ENCODE measurements at regions of chr1 and their contacts with region 1.

Region 1: DNA sequence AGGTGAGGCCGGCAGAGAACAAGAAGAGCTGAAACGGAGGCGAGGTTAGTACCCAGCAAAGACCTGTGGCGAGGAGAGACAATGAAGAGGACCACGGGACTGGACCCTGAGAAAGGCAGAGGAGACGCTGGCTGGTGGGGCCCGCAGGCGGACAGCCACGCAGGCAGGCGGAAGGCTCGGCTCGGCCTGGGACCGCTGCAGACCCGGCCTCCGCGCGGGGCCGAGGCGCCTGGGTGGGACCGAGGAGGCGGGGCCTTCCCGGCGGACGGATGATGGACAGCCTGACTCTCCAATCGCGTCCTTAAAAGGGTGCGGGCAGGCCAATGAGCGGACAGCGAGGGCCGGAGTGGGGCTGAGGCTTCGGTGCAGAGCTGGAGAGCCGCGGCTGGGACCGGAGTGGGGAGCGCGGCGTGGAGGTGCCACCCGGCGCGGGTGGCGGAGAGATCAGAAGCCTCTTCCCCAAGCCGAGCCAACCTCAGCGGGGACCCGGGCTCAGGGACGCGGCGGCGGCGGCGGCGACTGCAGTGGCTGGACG is at the start of gene MPZL1:
- DNase-seq: peak; percentile 98 to 100 (median 100)
- ATAC-seq: peak; percentile 97
- H3K4me3 ChIP-seq: peak within 1 kb of the TSS; percentile 73
- H3K27ac ChIP-seq: peak within 1 kb of the TSS; percentile 65
- H3K4me1 ChIP-seq: peaks cover 34 to 37% of the 10 kb centered on the region in 2 experiments; a peak in 4 of 5 replicates
- H3K27me3 ChIP-seq: no peaks in the 10 kb centered on the region
- CTCF ChIP-seq: no peak
- EP300 ChIP-seq: no peak
- POLR2A ChIP-seq: peak; percentile 72
- RAD21 ChIP-seq: no peak
- polyA plus RNA-seq, gene MPZL1: 14.5 to 20.5 TPM

Region 2: DNA sequence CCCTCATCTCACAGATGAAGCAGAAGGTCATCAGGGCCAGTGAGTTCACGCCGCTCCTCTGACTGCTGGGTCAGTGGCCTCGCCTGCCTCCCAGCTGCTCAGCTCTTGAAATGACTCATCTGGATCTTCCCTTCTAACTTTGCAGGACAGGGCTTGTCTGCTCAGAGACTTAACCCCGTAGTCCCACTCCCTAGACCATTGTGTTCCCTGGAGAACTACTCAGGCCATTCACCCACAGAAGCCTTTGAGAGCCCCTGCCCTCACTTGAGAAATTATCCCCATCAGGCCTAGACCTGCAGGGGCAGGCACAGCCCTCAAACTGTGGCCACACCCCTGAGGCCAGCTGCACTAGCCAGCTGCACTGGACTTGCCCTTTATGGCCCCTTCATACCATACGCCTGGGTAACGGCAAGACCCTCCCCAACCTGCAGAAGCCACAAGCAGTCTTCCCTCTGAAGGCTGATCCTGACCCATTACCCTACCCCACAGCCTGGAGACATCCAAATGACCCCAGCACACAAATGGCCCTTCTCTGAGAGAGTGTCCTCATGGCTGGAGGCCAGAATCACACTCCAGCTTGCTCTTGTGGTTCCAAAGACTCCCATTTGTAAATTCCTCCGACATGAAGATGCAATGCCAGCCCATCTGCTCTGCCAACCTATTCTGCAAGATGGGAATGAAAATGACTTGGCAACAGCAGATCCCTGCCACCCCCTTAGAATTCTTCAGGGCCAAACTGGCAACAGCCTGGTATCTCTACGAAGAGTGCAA is 58.5 kb before region 1 on chr1:
- CTCF ChIA-PET with region 1: no interaction called
- POLR2A ChIA-PET with region 1: no interaction called
- in situ Hi-C with region 1: no loop called
- intact Hi-C with region 1: no loop called
- DNase-seq: peak in 2 of 4 experiments; percentile 54 to 63
- ATAC-seq: peak; percentile 67
- H3K4me3 ChIP-seq: no peak overlapping the region
- H3K27ac ChIP-seq: no peak overlapping the region
- H3K4me1 ChIP-seq: peaks cover 20% of the 10 kb centered on the region in 2 experiments
- H3K27me3 ChIP-seq: no peaks in the 10 kb centered on the region
- CTCF ChIP-seq: 0 out of 6 replicates have a peak, but pooled peaks of 1 of the 3 experiments have one; percentile 6
- EP300 ChIP-seq: no peak
- POLR2A ChIP-seq: no peak
- RAD21 ChIP-seq: peak in 1 of 2 experiments; percentile 28; a peak in 1 of 4 replicates

Region 3: DNA sequence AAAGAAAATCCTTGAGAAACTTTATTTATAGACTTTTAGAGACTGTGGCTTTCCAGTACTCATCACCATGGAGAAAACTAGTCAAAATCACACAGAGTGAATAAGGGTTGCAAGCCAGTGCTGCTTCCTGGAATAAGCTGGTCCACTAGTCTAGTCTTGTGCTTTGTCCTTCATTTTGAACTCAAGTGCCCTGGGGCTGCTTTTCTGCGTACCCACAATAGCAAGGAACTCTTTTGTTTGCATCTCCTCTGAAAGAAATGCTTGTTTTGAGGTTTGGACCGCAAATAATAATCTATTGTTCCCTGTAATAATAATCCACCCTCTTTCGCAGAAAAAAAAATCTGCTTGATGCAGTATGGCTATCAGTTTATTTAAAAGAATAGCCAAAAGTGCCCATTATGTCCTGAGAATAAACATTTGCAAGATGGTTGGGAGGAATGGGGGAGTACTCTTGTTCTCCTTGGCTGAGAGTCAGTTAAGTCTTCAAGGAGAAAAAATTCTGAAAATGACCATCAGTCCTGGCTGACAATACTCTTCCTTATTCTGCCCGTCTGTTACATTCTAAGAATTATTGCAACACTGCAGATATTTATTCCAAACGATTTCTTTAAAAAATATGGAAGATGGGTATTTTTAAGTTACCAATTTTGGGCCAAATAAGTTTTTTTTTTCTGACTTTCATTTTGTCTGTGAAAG is 42.0 kb after region 1 on chr1:
- CTCF ChIA-PET with region 1: no interaction called
- POLR2A ChIA-PET with region 1: interaction called, 3 read pairs
- in situ Hi-C with region 1: no loop called
- intact Hi-C with region 1: loop called (anchors 2 kb)
- DNase-seq: no peak
- ATAC-seq: no peak
- H3K4me3 ChIP-seq: no peak overlapping the region
- H3K27ac ChIP-seq: no peak overlapping the region
- H3K4me1 ChIP-seq: peaks cover 11 to 54% of the 10 kb centered on the region in 2 experiments
- H3K27me3 ChIP-seq: no peaks in the 10 kb centered on the region
- CTCF ChIP-seq: no peak
- EP300 ChIP-seq: no peak
- POLR2A ChIP-seq: no peak
- RAD21 ChIP-seq: no peak

Region 4: DNA sequence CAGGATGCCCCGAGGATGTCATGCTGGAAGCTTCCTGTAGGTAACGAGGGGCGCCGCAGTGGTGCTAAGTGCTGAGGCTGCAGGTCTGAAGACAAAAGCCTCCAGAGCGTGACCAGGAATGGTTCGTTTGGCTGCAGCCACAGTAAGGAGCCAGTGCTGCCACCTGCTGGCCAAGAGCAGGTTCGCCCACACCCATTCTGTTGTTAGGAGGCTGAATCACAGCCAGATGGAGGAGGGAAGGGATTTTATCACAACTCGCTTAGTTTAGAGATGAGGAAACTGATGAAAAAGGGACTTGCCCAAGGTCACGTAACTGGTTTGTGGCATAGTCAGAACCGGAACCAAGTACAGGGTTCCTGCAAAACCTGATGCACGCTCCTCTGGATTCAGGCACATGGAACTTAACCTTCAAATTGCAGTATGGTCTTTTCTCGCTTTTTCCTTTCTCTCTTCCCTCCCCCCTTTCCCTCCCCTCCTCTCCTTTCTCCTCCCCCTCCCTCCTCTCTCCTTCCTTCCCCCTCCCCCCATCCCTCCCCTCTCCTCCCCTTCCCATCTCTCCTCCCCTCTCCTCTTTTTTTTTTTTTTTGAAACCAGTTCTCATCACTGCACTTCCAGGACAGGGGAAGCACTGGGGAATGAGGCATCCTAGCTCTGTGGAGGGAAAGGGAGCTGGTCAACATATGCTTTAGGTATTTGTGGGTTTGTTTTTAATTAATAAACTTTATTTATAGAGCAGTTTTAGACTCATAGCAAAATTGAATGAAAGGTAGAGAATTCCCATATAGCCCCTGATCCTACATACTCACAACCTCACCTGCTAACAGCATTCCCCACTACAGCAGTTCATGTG is 81.9 kb after region 1 on chr1:
- CTCF ChIA-PET with region 1: interaction called, 3 read pairs
- POLR2A ChIA-PET with region 1: interaction called, 4 read pairs
- in situ Hi-C with region 1: loop called (anchors 5 kb)
- intact Hi-C with region 1: loop called (anchors 1 kb)
- DNase-seq: peak; percentile 92 to 96 (median 94)
- ATAC-seq: peak; percentile 98
- H3K4me3 ChIP-seq: no peak overlapping the region
- H3K27ac ChIP-seq: no peak overlapping the region
- H3K4me1 ChIP-seq: peaks cover 0 to 7% of the 10 kb centered on the region in 2 experiments; a peak in 4 of 5 replicates
- H3K27me3 ChIP-seq: no peaks in the 10 kb centered on the region
- CTCF ChIP-seq: peak; percentile 98 to 100 (median 98)
- EP300 ChIP-seq: peak; percentile 8; the same call in 1 of the 2 replicates
- POLR2A ChIP-seq: no peak
- RAD21 ChIP-seq: peak; percentile 91 to 95

Region 5: GRCh38 chr1:167922023-167922422 is 200.3 kb after region 1 on chr1:
- CTCF ChIA-PET with region 1: no interaction called
- POLR2A ChIA-PET with region 1: no interaction called
- in situ Hi-C with region 1: no loop called
- intact Hi-C with region 1: loop called (anchors 5 kb)
- DNase-seq: no peak
- ATAC-seq: no peak
- H3K4me3 ChIP-seq: no peak overlapping the region
- H3K27ac ChIP-seq: peak overlapping the region; percentile 76; the same call in 2 of the 3 replicates
- H3K4me1 ChIP-seq: peaks cover 14 to 50% of the 10 kb centered on the region in 2 experiments
- H3K27me3 ChIP-seq: no peaks in the 10 kb centered on the region
- CTCF ChIP-seq: no peak
- EP300 ChIP-seq: no peak
- POLR2A ChIP-seq: no peak
- RAD21 ChIP-seq: no peak